ENCODE measurements at regions of chr2 and their contacts with region 1.

Region 1: GRCh38 chr2:108385411-108386071 is 7.8 kb downstream of the SULT1C4 start:
- DNase-seq: peak; percentile 87
- ATAC-seq: peak; percentile 100
- H3K4me3 ChIP-seq: no peak overlapping the region
- H3K27ac ChIP-seq: peak overlapping the region; percentile 7
- H3K4me1 ChIP-seq: peaks cover 29% of the 10 kb centered on the region
- H3K27me3 ChIP-seq: no peaks in the 10 kb centered on the region
- CTCF ChIP-seq: no peak
- EP300 ChIP-seq: peak in 1 of 2 experiments; percentile 30; a peak in 1 of 4 replicates
- POLR2A ChIP-seq: no peak
- RAD21 ChIP-seq: no peak

Region 2: GRCh38 chr2:108115868-108116267 is 269.7 kb before region 1 on chr2:
- CTCF ChIA-PET with region 1: no interaction called
- POLR2A ChIA-PET with region 1: no interaction called
- in situ Hi-C with region 1: no loop called
- intact Hi-C with region 1: no loop called
- DNase-seq: no peak
- ATAC-seq: no peak
- H3K4me3 ChIP-seq: no peak overlapping the region
- H3K27ac ChIP-seq: no peak overlapping the region
- H3K4me1 ChIP-seq: no peaks in the 10 kb centered on the region
- H3K27me3 ChIP-seq: no peaks in the 10 kb centered on the region
- CTCF ChIP-seq: no peak
- EP300 ChIP-seq: no peak
- POLR2A ChIP-seq: no peak
- RAD21 ChIP-seq: no peak

Region 3: DNA sequence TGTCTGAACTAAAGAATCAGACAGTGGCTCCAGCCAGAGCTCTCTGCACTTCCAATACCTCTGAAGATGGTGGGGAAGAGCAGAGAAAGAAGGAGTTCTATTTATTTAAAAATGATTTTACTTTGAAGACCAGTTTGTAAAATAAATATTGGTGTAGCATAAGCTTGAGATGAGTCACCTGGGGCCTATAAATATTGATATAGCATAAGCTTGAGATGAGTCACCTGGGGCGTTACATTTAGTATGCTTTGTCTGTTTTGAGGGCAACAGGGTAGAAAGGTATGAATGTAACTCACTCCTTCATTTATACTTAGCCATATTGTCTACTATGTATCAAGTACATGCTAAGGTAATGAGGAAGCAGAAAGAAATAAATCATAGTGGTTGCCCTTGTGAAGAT is 15.5 kb before region 1 on chr2:
- CTCF ChIA-PET with region 1: no interaction called
- POLR2A ChIA-PET with region 1: interaction called, 11 read pairs
- in situ Hi-C with region 1: no loop called
- intact Hi-C with region 1: loop called (anchors 2 kb)
- DNase-seq: peak; percentile 79
- ATAC-seq: peak; percentile 77
- H3K4me3 ChIP-seq: no peak overlapping the region
- H3K27ac ChIP-seq: no peak overlapping the region
- H3K4me1 ChIP-seq: peaks cover 33% of the 10 kb centered on the region
- H3K27me3 ChIP-seq: no peaks in the 10 kb centered on the region
- CTCF ChIP-seq: no peak
- EP300 ChIP-seq: peak in 1 of 2 experiments; percentile 85; a peak in 1 of 4 replicates
- POLR2A ChIP-seq: no peak
- RAD21 ChIP-seq: no peak

Region 4: DNA sequence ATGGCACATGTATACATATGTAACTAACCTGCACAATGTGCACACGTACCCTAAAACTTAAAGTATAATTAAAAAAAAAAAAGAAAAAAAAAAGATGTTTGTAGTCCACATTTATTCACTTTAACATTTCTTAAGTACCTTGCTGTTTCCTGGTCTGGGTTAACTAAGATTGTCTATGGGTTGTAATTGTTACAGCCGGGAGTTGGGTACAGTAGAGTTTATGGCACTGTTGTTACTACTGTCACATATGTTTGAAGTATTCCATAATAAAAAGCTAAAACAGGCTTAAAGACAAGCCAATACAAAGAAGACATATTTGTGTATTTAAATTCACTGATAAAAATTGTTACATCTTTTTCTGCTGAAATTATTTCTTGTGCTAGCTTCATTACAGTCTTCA is 99.7 kb after region 1 on chr2:
- CTCF ChIA-PET with region 1: no interaction called
- POLR2A ChIA-PET with region 1: no interaction called
- in situ Hi-C with region 1: no loop called
- intact Hi-C with region 1: no loop called
- DNase-seq: no peak
- ATAC-seq: no peak
- H3K4me3 ChIP-seq: no peak overlapping the region
- H3K27ac ChIP-seq: no peak overlapping the region
- H3K4me1 ChIP-seq: no peaks in the 10 kb centered on the region
- H3K27me3 ChIP-seq: no peaks in the 10 kb centered on the region
- CTCF ChIP-seq: no peak
- EP300 ChIP-seq: no peak
- POLR2A ChIP-seq: no peak
- RAD21 ChIP-seq: no peak

Region 5: DNA sequence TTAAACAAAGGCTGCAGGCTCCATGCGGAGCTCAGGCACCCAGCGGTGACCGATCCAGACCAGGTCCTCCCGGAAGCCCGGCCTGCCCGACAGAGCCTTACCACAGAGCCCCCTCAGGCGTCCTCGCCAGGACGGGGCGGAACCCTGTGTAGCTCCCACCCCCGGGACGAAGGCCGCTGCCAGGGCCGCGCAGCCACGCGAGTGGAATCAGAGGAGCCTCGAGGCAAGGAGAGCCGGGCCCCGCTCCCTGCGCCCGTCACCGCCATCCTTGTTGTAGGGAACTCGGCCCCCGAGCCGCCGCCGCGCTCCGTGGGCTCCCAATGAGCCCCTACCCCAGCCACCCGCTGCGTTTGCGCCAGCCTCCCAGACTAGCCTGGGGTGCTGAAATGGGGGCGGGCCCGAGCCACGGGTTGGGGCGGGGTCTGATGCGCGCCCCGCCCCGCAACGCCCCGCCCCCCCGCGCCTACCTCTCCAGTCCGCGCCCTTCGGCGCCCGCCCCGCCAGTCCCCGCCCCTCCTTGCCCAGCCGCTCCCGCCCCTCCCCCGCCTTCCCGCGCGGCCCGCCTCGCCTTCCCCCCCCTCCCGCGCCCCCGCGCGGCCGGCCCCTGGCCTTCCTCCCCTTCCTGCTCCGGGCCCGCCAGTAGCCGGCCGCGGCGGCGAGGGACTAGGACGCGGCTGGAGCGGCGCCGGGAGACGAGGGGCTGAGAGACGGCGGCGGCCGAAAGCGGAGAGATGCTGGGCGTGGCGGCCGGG is 148.5 kb after region 1 on chr2 and contains the start of gene LIMS1:
- CTCF ChIA-PET with region 1: no interaction called
- POLR2A ChIA-PET with region 1: interaction called, 6 read pairs
- in situ Hi-C with region 1: no loop called
- intact Hi-C with region 1: loop called (anchors 5 kb)
- DNase-seq: peak; percentile 82
- ATAC-seq: peak; percentile 91
- H3K4me3 ChIP-seq: peak within 1 kb of the TSS; percentile 95 to 99 (median 97)
- H3K27ac ChIP-seq: peak within 1 kb of the TSS; percentile 96
- H3K4me1 ChIP-seq: peaks cover 61% of the 10 kb centered on the region
- H3K27me3 ChIP-seq: no peaks in the 10 kb centered on the region; a peak in 1 of 5 replicates
- CTCF ChIP-seq: no peak; the same call in 1 of the 2 replicates
- EP300 ChIP-seq: peak in 1 of 2 experiments; percentile 17; a peak in 1 of 4 replicates
- POLR2A ChIP-seq: peak; percentile 97
- RAD21 ChIP-seq: peak; percentile 72
- total RNA-seq, gene LIMS1: 38.3 and 55.1 TPM in 2 replicates

Measured in HepG2 (cell line).